Lower leg skin (tissue), 4 donors: ENCODE measurements at regions of chr6 and their contacts with region 1.

Region 1: DNA sequence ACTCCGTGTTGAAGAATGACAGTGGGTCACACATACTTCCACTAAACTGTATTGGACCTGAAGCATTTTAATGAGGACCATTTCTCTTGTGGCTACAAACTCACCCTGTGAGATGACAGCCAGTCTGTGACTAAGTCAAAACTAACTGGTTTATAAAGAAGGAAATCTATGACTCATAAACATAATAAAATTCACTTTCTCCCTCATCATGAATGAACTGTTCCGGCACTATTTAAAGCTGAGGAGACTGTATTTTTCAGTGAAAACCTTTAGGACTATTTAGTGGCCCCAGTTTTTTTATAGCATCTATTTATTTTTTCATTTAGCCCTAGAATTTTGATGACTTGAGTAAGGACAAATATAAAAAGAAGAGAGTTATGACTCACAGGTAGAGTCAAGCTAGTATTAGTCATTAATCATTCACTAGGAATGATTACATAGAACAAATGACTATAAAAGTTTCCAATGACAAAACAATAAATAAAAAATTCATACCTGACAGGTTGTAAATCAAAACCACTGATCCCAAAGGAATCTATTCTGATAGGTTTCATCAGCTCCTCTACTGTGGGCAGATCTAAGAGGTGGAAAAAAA is 34.2 kb downstream of the CEP162 start:
- DNase-seq: no peak
- H3K4me3 ChIP-seq: no peak overlapping the region
- CTCF ChIP-seq: no peak
- POLR2A ChIP-seq: no peak

Region 2: GRCh38 chr6:82951396-82951795 is 1241.8 kb before region 1 on chr6:
- intact Hi-C with region 1: loop called (anchors 10 kb)
- DNase-seq: no peak
- H3K4me3 ChIP-seq: no peak overlapping the region
- CTCF ChIP-seq: no peak
- POLR2A ChIP-seq: no peak